PC-3 (cell line): ENCODE measurements at regions of chr3 and their contacts with region 1.

Region 1: GRCh38 chr3:36957862-36958686 is 13.2 kb upstream of the TRANK1 start:
- DNase-seq: peak; percentile 84
- ATAC-seq: peak; percentile 69
- H3K4me3 ChIP-seq: peak overlapping the region; percentile 53; the same call in 1 of the 2 replicates
- H3K27ac ChIP-seq: peak overlapping the region; percentile 77
- H3K4me1 ChIP-seq: peaks cover 35% of the 10 kb centered on the region
- H3K27me3 ChIP-seq: no peaks in the 10 kb centered on the region
- CTCF ChIP-seq: no peak

Region 2: DNA sequence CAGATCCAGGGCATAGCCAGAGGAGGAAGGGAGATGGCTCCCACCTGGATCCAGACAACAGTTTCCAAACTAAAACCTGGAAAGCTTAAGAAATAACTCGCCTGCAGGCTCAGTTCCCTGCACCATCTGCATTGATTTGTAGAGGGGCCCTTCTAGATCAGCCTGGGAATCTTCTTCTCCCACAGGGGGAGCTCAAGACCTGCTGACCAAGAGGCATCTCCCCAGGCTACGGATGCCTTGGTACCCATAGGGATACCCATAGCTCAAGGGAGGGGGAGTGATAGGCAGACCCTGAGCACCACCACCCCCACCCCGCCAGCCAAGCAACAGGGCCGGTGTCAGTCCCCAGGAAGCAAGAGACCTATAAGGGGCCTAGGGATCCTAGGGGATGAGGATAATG is 165.7 kb before region 1 on chr3:
- CTCF ChIA-PET with region 1: interaction called, 9 read pairs
- POLR2A ChIA-PET with region 1: no interaction called
- intact Hi-C with region 1: loop called (anchors 1 kb)
- DNase-seq: peak; percentile 67
- ATAC-seq: peak; percentile 93
- H3K4me3 ChIP-seq: no peak overlapping the region
- H3K27ac ChIP-seq: no peak overlapping the region
- H3K4me1 ChIP-seq: no peaks in the 10 kb centered on the region
- H3K27me3 ChIP-seq: peaks cover 22% of the 10 kb centered on the region; the same call in 1 of the 2 replicates
- CTCF ChIP-seq: peak; percentile 73

Region 3: DNA sequence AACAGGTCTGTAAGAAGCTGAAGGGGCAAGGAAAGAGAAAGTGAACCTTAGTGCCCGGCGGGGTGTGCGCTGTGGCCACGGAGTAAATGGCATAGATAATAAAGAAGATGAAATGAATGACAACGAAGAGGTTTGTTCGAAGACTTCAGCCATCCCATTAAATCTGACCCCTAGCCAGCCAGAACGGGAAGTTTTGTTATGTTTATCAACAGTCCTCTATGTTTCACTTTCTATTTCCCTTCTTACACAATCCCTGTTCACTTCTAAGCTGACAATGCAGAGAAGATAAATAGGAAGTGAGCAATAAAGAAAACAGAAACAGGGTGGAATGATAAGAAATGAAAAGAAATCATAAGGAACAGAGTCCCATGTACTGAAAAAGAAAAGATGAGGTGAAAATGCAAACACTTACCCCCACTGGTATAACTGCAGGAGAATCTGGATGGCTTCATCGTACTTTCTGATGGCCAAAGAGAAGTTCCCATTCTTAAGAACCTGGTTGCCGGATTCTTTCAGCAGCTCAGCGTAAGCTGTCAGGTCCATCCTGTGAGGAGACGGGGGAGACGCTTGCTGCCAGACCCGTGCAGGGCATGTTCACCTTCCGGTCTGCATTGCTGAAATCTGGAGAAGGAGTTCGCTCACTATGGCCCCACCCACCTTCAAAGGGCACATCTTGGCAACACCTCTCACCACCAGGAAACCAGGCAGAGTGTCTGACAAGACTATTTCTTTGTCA is 50.0 kb before region 1 on chr3:
- CTCF ChIA-PET with region 1: interaction called, 84 read pairs
- POLR2A ChIA-PET with region 1: interaction called, 4 read pairs
- intact Hi-C with region 1: loop called (anchors 1 kb)
- DNase-seq: peak; percentile 65
- ATAC-seq: peak; percentile 64
- H3K4me3 ChIP-seq: peak overlapping the region; percentile 78
- H3K27ac ChIP-seq: peak overlapping the region; percentile 53
- H3K4me1 ChIP-seq: peaks cover 34% of the 10 kb centered on the region
- H3K27me3 ChIP-seq: no peaks in the 10 kb centered on the region
- CTCF ChIP-seq: no peak

Region 4: GRCh38 chr3:36981006-36981405 is 22.9 kb after region 1 on chr3:
- CTCF ChIA-PET with region 1: no interaction called
- POLR2A ChIA-PET with region 1: no interaction called
- intact Hi-C with region 1: no loop called
- DNase-seq: no peak
- ATAC-seq: no peak
- H3K4me3 ChIP-seq: no peak overlapping the region
- H3K27ac ChIP-seq: no peak overlapping the region
- H3K4me1 ChIP-seq: no peaks in the 10 kb centered on the region
- H3K27me3 ChIP-seq: no peaks in the 10 kb centered on the region
- CTCF ChIP-seq: no peak

Region 5: GRCh38 chr3:36993326-36994283 is 35.5 kb after region 1 on chr3 and contains the start of gene MLH1:
- CTCF ChIA-PET with region 1: interaction called, 8 read pairs
- POLR2A ChIA-PET with region 1: interaction called, 7 read pairs
- intact Hi-C with region 1: loop called (anchors 1 kb)
- DNase-seq: peak; percentile 100
- ATAC-seq: peak; percentile 85
- H3K4me3 ChIP-seq: peak within 1 kb of the TSS; percentile 83
- H3K27ac ChIP-seq: peak within 1 kb of the TSS; percentile 82
- H3K4me1 ChIP-seq: peaks cover 33% of the 10 kb centered on the region
- H3K27me3 ChIP-seq: no peaks in the 10 kb centered on the region
- CTCF ChIP-seq: no peak
- total RNA-seq, gene MLH1: 55.8 and 79.7 TPM in 2 replicates

Region 6: DNA sequence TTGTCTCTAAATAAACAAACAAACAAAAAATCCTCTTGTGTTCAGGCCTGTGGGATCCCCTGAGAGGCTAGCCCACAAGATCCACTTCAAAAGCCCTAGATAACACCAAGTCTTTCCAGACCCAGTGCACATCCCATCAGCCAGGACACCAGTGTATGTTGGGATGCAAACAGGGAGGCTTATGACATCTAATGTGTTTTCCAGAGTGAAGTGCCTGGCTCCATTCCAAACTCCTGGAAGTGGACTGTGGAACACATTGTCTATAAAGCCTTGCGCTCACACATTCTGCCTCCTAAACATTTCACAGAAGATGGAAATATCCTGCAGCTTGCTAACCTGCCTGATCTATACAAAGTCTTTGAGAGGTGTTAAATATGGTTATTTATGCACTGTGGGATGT is 92.2 kb after region 1 on chr3:
- CTCF ChIA-PET with region 1: no interaction called
- POLR2A ChIA-PET with region 1: no interaction called
- intact Hi-C with region 1: no loop called
- DNase-seq: no peak
- ATAC-seq: no peak
- H3K4me3 ChIP-seq: no peak overlapping the region
- H3K27ac ChIP-seq: no peak overlapping the region
- H3K4me1 ChIP-seq: peaks cover 19% of the 10 kb centered on the region
- H3K27me3 ChIP-seq: no peaks in the 10 kb centered on the region
- CTCF ChIP-seq: no peak